Brain microvascular endothelial cell (primary cell): ENCODE measurements at regions of chr2 and their contacts with region 1.

Region 1: GRCh38 chr2:102487761-102488466 is 14.9 kb downstream of the SLC9A4 start:
- DNase-seq: peak; percentile 5
- H3K4me3 ChIP-seq: no peak overlapping the region
- H3K27ac ChIP-seq: no peak overlapping the region
- H3K27me3 ChIP-seq: no peaks in the 10 kb centered on the region
- CTCF ChIP-seq: no peak

Region 2: GRCh38 chr2:101252408-101253012 is 1235.4 kb before region 1 on chr2 and contains the start of gene CNOT11:
- in situ Hi-C with region 1: no loop called
- DNase-seq: peak; percentile 98
- H3K4me3 ChIP-seq: peak within 1 kb of the TSS; percentile 87
- H3K27ac ChIP-seq: peak within 1 kb of the TSS; percentile 80
- H3K27me3 ChIP-seq: no peaks in the 10 kb centered on the region
- CTCF ChIP-seq: no peak

Region 3: GRCh38 chr2:102271844-102272243 is 216.1 kb before region 1 on chr2:
- in situ Hi-C with region 1: no loop called
- DNase-seq: no peak
- H3K4me3 ChIP-seq: no peak overlapping the region
- H3K27ac ChIP-seq: no peak overlapping the region
- H3K27me3 ChIP-seq: no peaks in the 10 kb centered on the region
- CTCF ChIP-seq: peak; percentile 3

Region 4: GRCh38 chr2:102615622-102616436 is 127.9 kb after region 1 on chr2:
- in situ Hi-C with region 1: loop called (anchors 25 kb)
- DNase-seq: peak; percentile 54
- H3K4me3 ChIP-seq: no peak overlapping the region
- H3K27ac ChIP-seq: no peak overlapping the region
- H3K27me3 ChIP-seq: peaks cover 25% of the 10 kb centered on the region
- CTCF ChIP-seq: peak; percentile 100

Region 5: DNA sequence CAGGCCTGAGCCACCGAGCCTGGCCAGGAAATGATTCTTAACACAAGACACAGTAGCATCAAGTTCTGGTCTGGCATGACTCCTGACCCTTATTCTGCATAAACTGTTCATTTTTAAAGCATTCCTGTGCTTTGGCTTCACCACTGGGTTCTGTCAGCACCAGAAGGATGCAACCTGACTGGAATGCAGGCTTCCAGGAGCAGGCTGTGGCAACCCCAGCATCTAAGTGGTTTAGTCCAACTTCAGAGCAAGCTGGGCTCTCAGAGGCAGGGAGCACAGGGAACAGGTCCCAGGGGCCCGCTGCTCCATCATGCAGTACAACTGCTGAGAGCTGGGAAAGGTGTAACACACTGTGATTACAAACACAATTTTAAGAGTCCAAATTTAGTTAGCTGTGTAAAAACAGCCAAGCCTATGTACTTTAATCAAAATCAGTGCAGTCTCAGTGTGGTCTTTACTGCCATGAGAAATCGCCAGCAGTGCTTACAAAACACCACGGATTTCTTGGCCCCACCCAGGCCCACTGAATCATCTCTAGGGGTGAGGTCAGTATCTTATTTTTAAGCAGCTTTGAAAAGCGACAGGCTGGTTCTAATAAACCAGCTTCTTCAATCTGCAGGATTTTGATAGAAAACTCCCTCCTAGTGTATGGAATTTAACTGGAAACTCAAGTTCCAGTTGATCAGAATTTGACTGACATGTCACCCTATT is 229.5 kb after region 1 on chr2:
- in situ Hi-C with region 1: no loop called
- DNase-seq: no peak
- H3K4me3 ChIP-seq: no peak overlapping the region
- H3K27ac ChIP-seq: no peak overlapping the region
- H3K27me3 ChIP-seq: no peaks in the 10 kb centered on the region
- CTCF ChIP-seq: no peak